Activated CD4-positive, alpha-beta T cell treated with anti-CD3 and anti-CD28 coated beads for 36 hours (primary cell): ENCODE measurements at regions of chr6 and their contacts with region 1.

Region 1: DNA sequence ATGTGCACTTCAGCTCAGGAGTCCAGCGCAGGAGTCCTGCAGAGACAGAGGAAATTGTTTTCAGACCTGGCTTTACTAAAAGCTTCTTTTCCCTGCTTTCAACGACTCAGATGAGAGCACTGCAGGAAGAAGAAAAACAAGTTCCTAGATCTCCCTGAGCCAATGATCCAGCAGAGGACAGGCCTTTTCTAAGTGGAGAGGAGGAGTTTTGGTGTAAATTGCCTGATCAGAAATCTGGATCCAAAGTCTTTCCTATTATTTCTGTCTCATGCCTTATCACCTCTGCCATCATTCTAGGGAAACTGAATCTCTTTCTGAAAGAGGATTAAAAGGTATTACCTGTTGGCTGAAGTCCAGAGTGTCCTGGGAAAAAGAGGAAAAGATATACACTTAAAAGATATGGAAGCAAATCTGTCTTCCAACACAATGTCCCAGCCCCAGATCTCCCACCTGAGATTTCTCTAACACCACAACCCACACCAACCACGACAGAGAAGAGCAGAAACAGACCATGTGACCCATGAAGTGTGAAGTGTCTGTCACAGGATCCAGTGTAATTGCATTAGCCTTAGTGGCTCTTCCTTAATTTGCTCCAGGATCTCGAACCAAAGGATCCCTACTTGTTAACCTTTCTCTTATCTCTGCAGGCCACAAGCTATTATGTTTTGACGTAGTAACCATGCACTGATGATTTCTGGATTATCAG is 23.1 kb upstream of the HLA-DRB5 start:
- DNase-seq: no peak
- ATAC-seq: no peak
- H3K4me3 Mint-ChIP-seq: no peak overlapping the region
- H3K27ac Mint-ChIP-seq: no peak overlapping the region
- H3K4me1 Mint-ChIP-seq: no peaks in the 10 kb centered on the region
- H3K27me3 Mint-ChIP-seq: peaks cover 9% of the 10 kb centered on the region

Region 2: GRCh38 chr6:32424589-32425300 is 128.4 kb before region 1 on chr6:
- CTCF ChIA-PET with region 1: no interaction called
- POLR2A ChIA-PET with region 1: no interaction called
- intact Hi-C with region 1: no loop called
- DNase-seq: no peak
- ATAC-seq: no peak
- H3K4me3 Mint-ChIP-seq: no peak overlapping the region
- H3K27ac Mint-ChIP-seq: no peak overlapping the region
- H3K4me1 Mint-ChIP-seq: no peaks in the 10 kb centered on the region
- H3K27me3 Mint-ChIP-seq: peaks cover 20% of the 10 kb centered on the region

Region 3: DNA sequence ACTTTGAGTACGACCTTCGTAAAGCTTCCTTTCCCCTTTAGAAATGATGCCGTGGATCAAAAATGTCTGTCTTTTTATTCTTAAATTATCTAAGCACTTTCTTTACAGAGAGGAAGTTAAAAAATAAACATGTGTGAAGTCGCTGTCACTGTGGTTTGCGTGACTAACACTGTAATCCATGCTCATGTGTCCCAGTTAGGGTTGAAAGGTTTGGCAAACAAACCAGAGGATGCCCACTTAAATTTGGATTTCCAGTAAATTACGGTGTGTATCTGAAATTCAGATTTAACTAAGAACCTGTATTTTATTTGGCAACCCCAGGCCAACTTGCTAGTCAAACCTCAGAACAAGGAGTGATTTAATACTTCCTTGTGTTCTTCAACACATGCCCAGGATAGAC is 15.4 kb after region 1 on chr6:
- CTCF ChIA-PET with region 1: no interaction called
- POLR2A ChIA-PET with region 1: no interaction called
- intact Hi-C with region 1: no loop called
- DNase-seq: no peak
- ATAC-seq: no peak
- H3K4me3 Mint-ChIP-seq: no peak overlapping the region
- H3K27ac Mint-ChIP-seq: no peak overlapping the region
- H3K4me1 Mint-ChIP-seq: peaks cover 7% of the 10 kb centered on the region
- H3K27me3 Mint-ChIP-seq: no peaks in the 10 kb centered on the region

Region 4: DNA sequence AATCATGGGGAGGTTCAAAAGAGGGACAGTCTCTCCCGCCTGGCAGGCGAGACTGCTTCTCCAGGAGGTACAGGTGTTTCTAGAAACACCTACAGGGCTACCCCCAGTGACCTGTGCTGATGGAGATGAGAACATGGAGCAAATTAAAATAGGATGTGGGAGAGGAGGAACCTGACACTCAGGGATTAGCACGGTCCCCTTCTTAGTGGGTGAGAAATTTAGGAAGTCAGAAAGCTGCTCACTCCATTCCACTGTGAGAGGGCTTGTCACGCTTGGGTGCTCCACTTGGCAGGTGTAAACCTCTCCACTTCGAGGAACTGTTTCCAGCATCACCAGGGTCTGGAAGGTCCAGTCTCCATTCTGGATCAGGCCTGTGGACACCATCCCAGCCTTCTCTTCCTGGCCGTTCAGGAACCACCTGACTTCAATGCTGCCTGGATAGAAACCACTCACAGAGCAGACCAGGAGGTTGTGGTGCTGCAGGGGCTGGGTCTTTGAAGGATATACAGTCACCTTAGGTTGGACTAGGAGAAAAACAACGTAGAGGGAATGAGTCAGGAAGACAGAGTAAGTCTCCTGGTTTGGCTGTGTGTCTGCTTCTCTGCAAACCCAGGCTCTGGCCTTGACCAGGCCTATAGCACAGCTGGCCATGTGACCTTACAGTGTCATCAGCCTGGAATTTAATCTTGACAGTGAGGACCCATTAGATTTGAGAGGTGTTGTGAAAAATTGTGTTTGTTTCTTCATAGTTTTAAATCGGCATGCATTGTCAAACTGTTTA is 28.3 kb after region 1 on chr6:
- CTCF ChIA-PET with region 1: no interaction called
- POLR2A ChIA-PET with region 1: no interaction called
- intact Hi-C with region 1: loop called in 1 of 2 experiments (anchors 1 kb)
- DNase-seq: no peak
- ATAC-seq: no peak
- H3K4me3 Mint-ChIP-seq: no peak overlapping the region
- H3K27ac Mint-ChIP-seq: no peak overlapping the region
- H3K4me1 Mint-ChIP-seq: peaks cover 16% of the 10 kb centered on the region
- H3K27me3 Mint-ChIP-seq: no peaks in the 10 kb centered on the region